ENCODE measurements at regions of chr4 and their contacts with region 1.

Region 1: DNA sequence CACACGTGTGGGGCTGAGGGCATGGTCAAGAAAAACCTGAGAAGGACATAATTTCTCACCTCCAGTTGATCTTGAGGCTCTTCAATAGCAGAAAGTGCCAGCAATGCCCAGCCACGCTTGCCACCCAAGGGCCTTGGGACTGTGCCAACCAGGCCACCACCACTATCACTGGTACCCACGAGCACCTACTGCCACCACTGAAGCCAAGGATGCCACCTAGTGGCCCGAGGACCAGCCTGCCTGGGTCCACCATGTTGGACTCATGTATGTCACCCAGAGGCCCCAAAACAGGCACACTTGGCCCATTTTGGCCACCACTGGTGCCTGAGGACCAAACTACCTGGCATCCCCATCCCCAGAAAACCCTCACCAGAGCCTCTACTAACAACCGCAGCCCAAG is 191.8 kb downstream of the ADAM29 start:
- DNase-seq: no peak
- H3K4me3 ChIP-seq: no peak overlapping the region
- H3K27ac ChIP-seq: no peak overlapping the region
- H3K4me1 ChIP-seq: no peaks in the 10 kb centered on the region
- H3K27me3 ChIP-seq: no peaks in the 10 kb centered on the region
- CTCF ChIP-seq: no peak
- EP300 ChIP-seq: no peak
- POLR2A ChIP-seq: no peak

Region 2: GRCh38 chr4:174946246-174946645 is 163.7 kb before region 1 on chr4:
- intact Hi-C with region 1: no loop called
- DNase-seq: no peak
- H3K4me3 ChIP-seq: no peak overlapping the region
- H3K27ac ChIP-seq: no peak overlapping the region
- H3K4me1 ChIP-seq: no peaks in the 10 kb centered on the region
- H3K27me3 ChIP-seq: no peaks in the 10 kb centered on the region
- CTCF ChIP-seq: no peak
- EP300 ChIP-seq: no peak
- POLR2A ChIP-seq: no peak

Region 3: GRCh38 chr4:175090089-175090488 is 19.8 kb before region 1 on chr4:
- intact Hi-C with region 1: loop called in 1 of 4 experiments (anchors 1 kb)
- DNase-seq: no peak
- H3K4me3 ChIP-seq: no peak overlapping the region
- H3K27ac ChIP-seq: no peak overlapping the region
- H3K4me1 ChIP-seq: no peaks in the 10 kb centered on the region
- H3K27me3 ChIP-seq: no peaks in the 10 kb centered on the region
- CTCF ChIP-seq: no peak
- EP300 ChIP-seq: no peak
- POLR2A ChIP-seq: no peak

Measured in ovary (tissue), 10 donors.